ENCODE measurements at regions of chr13 and their contacts with region 1.

Region 1: DNA sequence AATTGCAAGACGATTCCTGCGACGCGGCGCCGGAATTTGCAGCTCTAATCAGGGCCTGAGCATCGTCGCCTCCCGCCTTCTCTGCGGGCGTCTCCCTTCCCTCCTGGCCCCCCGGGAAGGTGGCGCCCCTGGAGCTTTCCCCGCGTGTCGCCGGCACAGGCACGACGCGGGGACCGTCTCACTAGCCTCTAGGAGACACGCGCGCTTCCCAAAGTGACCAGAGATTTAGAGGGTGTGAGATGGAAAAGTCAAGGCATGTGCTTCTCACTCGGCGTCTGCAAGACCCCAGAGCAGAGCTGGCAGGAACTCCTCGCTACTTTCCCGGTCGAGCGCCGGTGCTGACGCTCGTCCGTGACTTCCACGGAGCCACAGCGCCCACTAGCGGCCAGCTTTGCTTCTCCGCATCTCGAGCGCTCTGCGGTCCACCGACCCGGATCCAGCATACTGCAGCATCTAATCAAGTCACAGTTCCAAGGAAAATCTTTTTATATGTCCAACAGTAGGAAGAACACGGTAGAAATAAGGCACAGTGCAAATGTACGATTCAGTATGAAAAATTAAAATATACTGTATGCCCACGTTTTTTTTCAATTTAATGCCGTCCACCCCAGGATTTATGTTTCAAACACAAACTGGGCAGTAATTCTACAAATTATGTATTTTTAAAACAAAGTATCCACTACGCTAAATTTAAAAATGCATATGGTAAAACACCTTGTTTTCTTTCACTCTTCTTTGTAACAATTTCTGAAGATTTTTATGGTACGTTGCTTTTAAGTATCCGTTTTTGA is 977 bp upstream of the EFNB2 start:
- DNase-seq: peak; percentile 96
- H3K4me3 ChIP-seq: peak overlapping the region; percentile 78 to 85 (median 82)
- H3K27ac ChIP-seq: peak overlapping the region; percentile 81 to 90 (median 84)
- H3K4me1 ChIP-seq: peaks cover 19 to 45% (median 39%) of the 10 kb centered on the region in 4 donors
- H3K27me3 ChIP-seq: no peaks in the 10 kb centered on the region
- CTCF ChIP-seq: peak; percentile 81 to 96 (median 94)
- EP300 ChIP-seq: no peak
- POLR2A ChIP-seq: no peak

Region 2: GRCh38 chr13:104571161-104571892 is 1965.1 kb before region 1 on chr13:
- intact Hi-C with region 1: loop called (anchors 10 kb)
- DNase-seq: no peak
- H3K4me3 ChIP-seq: peak overlapping the region in 3 of 4 donors; percentile 6 to 36 (median 14)
- H3K27ac ChIP-seq: peak overlapping the region; percentile 39 to 63 (median 54)
- H3K4me1 ChIP-seq: peaks cover 2 to 25% (median 20%) of the 10 kb centered on the region in 4 donors
- H3K27me3 ChIP-seq: no peaks in the 10 kb centered on the region
- CTCF ChIP-seq: peak; percentile 56 to 76 (median 58)
- EP300 ChIP-seq: no peak
- POLR2A ChIP-seq: no peak

Region 3: DNA sequence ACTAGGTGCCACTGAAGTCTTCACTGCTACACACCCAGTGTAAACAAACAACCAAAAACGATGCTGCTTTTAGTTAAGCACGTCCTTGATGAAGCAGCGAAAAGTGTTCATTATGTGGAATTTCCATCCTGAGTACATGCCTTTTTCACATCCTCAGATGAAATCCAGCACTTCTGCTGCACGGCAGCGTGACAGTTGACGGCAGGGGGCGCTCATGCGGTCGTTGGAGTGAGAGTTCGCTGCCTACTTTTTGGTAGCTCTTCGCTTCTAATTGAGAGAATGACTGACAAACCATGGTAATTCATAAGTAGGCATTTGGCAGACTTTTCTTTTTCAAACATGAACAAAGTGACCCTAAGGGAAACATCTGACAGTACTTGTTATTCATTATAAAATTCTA is 1125.8 kb before region 1 on chr13:
- intact Hi-C with region 1: loop called (anchors 10 kb)
- DNase-seq: no peak
- H3K4me3 ChIP-seq: no peak overlapping the region
- H3K27ac ChIP-seq: no peak overlapping the region
- H3K4me1 ChIP-seq: no peaks in the 10 kb centered on the region
- H3K27me3 ChIP-seq: no peaks in the 10 kb centered on the region
- CTCF ChIP-seq: peak; percentile 30 to 72 (median 53)
- EP300 ChIP-seq: no peak
- POLR2A ChIP-seq: no peak

Region 4: GRCh38 chr13:106455777-106456176 is 80.7 kb before region 1 on chr13:
- intact Hi-C with region 1: no loop called
- DNase-seq: no peak
- H3K4me3 ChIP-seq: no peak overlapping the region
- H3K27ac ChIP-seq: no peak overlapping the region
- H3K4me1 ChIP-seq: no peaks in the 10 kb centered on the region
- H3K27me3 ChIP-seq: no peaks in the 10 kb centered on the region
- CTCF ChIP-seq: no peak
- EP300 ChIP-seq: no peak
- POLR2A ChIP-seq: no peak

Region 5: GRCh38 chr13:106619688-106620555 is 83.5 kb after region 1 on chr13:
- intact Hi-C with region 1: loop called (anchors 5 kb)
- DNase-seq: no peak
- H3K4me3 ChIP-seq: no peak overlapping the region
- H3K27ac ChIP-seq: no peak overlapping the region
- H3K4me1 ChIP-seq: peaks cover 6 to 8% (median 6%) of the 10 kb centered on the region in 4 donors
- H3K27me3 ChIP-seq: peaks cover 0 to 3% (median 0%) of the 10 kb centered on the region in 4 donors
- CTCF ChIP-seq: peak; percentile 66 to 81 (median 74)
- EP300 ChIP-seq: no peak
- POLR2A ChIP-seq: no peak

Measured in esophagus muscularis mucosa (tissue), 4 donors.